Right cardiac atrium (tissue), 5 donors: ENCODE measurements at regions of chr18 and their contacts with region 1.

Region 1: DNA sequence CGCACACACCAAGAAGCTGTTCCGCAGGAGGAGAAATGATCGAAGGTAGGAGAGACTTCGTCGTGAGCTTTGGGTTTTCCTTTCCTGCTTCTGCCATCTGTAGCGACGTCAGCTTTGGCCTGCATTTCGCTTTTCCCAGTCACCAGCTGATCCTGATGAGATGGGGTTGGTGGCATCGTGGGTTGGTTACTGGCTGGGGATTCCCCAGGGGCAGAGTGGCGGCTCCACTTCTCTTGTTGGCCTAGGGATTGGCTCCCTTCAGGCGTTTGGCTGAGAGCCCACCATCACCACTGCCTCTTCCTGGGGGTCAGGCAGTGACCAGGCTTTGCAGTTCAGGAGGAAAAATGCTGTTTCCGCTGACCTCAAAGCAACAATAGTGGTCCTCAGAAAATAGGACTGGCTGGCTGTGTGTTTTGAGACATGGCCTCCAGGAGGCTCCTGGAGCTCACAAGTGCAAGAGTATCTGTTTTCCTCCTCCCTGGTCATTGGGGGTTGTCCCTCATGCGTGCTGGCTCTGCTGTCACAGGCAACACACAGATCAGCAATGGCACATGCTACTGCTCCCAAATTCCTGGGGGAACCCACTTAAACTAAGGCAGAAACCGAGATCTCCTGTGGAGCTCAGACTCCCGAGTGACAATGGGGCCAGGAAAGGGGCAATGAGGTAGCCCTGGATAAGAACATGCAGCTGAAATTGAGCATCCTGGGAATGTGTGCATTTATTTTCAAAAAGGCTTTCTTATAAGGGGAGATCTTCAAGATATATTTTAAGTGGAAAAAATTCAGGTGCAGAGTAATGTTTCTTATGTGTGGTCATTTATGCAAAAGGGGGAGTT is 173.0 kb downstream of the CTIF start:
- DNase-seq: peak; percentile 67 to 83 (median 78)
- ATAC-seq: peak; percentile 69 to 72
- H3K4me3 ChIP-seq: no peak overlapping the region
- H3K27ac ChIP-seq: peak overlapping the region; percentile 39
- H3K4me1 ChIP-seq: peaks cover 32% of the 10 kb centered on the region
- H3K27me3 ChIP-seq: no peaks in the 10 kb centered on the region

Region 2: GRCh38 chr18:49178736-49179135 is 466.9 kb after region 1 on chr18:
- intact Hi-C with region 1: loop called in 2 of 4 experiments (anchors 10 kb)
- DNase-seq: peak in 1 of 3 donors; percentile 18
- ATAC-seq: peak in 1 of 2 donors; percentile 62
- H3K4me3 ChIP-seq: no peak overlapping the region
- H3K27ac ChIP-seq: no peak overlapping the region
- H3K4me1 ChIP-seq: no peaks in the 10 kb centered on the region
- H3K27me3 ChIP-seq: no peaks in the 10 kb centered on the region